ENCODE measurements at regions of chr14 and their contacts with region 1.

Region 1: GRCh38 chr14:91349481-91350074 is 68.0 kb downstream of the CCDC88C start:
- DNase-seq: no peak
- H3K4me3 ChIP-seq: no peak overlapping the region
- H3K27ac ChIP-seq: no peak overlapping the region
- H3K4me1 ChIP-seq: no peaks in the 10 kb centered on the region
- H3K27me3 ChIP-seq: no peaks in the 10 kb centered on the region
- CTCF ChIP-seq: no peak

Region 2: DNA sequence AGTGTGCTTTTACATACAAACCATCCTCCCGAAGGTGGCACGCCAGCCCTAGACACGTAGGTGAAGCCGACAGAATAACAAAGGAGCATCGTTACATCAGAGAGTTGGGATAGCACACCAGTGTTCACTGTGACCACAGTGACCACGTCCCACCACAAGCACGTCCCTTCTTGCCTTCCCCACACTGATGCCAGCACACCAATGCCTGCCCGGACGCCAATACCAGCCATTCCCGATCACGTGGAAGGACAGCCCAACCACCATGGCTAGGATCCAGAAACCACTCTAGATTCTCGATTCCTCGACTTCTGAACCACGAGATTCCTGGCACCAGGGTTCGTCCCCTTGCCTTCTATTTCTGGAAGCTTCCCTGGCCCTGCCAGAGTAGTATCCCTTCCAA is 57.1 kb before region 1 on chr14:
- CTCF ChIA-PET with region 1: no interaction called
- dilution Hi-C with region 1: loop called (anchors 5 kb)
- in situ Hi-C with region 1: no loop called
- intact Hi-C with region 1: no loop called
- DNase-seq: peak; percentile 91
- H3K4me3 ChIP-seq: no peak overlapping the region
- H3K27ac ChIP-seq: no peak overlapping the region
- H3K4me1 ChIP-seq: peaks cover 15% of the 10 kb centered on the region
- H3K27me3 ChIP-seq: peaks cover 7% of the 10 kb centered on the region
- CTCF ChIP-seq: no peak

Region 3: DNA sequence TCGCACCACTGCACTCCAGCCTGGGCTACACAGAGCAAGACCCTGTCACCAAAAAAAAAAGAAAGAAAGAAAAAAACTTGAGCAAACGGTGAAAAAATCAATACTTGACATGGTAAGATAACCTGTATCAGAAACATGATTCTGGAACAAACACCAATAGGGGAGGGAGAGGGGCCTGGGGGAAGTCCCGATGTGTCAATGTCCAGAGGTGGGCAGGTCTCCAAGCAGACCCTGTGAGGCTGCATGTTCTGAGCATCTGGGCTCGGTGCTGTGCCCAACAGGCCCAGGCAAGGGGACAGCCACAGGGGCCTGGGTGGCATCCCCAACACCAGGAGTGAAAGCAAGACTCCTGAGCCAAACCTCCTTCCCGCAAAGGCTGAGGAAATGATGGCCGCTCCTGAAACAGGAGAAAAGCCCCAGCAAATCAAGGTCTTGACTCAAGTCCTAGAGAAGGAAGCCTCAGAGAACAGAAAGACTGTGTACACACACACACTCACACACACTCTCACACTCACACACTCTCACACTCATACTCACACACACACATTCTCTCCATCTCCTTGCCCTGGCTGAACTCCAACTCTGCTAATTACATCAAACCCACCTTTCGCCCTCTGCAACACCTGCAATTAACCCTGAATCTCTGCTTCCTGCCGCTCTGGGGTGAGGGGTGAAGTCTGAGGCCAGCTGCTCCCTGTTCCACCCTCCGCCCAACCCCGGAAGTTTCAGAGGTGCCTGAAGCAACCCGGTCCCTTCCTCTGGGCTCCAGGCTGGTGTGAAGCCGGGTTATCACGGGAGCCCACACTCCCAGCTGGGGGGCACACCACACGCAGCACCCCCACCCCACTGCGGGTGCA is 47.6 kb after region 1 on chr14:
- CTCF ChIA-PET with region 1: no interaction called
- dilution Hi-C with region 1: loop called (anchors 10 kb)
- in situ Hi-C with region 1: no loop called
- intact Hi-C with region 1: no loop called
- DNase-seq: no peak
- H3K4me3 ChIP-seq: no peak overlapping the region
- H3K27ac ChIP-seq: no peak overlapping the region
- H3K4me1 ChIP-seq: peaks cover 16% of the 10 kb centered on the region
- H3K27me3 ChIP-seq: no peaks in the 10 kb centered on the region
- CTCF ChIP-seq: no peak